ENCODE measurements at regions of chr7 and their contacts with region 1.

Region 1: DNA sequence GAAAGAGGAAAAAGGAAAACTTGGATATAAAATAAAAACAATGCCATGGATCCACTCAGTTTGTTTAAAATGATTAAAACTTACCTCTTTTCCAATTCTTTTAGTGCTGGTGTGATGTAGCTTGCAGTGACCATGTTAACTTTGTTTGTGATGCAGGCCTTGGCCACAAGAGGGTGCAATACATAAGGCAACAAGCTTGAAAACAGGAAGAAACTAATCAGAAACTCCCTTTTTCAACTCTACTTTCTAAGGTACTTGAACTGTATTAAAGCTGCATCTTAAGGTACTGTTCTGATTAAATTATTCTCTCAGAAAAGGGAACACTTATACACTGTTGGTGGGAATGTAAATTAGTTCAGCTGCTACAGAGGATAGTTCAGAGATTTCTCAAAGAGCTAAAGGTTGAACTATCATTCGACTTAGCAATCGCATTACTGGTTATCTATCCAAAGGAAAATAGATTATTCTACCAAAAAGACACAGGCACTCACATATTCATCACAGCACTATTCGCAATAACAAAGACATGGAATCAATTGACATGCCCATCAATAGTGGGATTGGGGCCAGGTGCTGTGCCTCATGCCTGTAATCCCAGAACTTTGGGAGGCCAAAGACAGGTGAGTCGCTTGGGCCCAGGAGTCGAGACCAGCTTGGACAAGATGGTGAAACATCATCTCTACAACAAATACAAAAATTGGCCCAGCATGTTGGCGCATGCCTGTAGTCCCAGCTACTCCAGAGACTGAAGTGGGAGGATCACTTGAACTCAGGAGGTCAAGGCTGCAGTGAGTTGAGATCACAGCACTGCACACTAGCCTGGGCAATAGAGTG is 50.9 kb downstream of the AASS start:
- DNase-seq: peak; percentile 73 to 75
- H3K4me3 ChIP-seq: no peak overlapping the region
- H3K4me3 Mint-ChIP-seq: no peak overlapping the region
- H3K27ac Mint-ChIP-seq: no peak overlapping the region
- H3K4me1 ChIP-seq: no peaks in the 10 kb centered on the region
- H3K4me1 Mint-ChIP-seq: no peaks in the 10 kb centered on the region
- H3K27me3 ChIP-seq: no peaks in the 10 kb centered on the region
- H3K27me3 Mint-ChIP-seq: no peaks in the 10 kb centered on the region
- CTCF ChIP-seq: peak; percentile 81 to 91

Region 2: DNA sequence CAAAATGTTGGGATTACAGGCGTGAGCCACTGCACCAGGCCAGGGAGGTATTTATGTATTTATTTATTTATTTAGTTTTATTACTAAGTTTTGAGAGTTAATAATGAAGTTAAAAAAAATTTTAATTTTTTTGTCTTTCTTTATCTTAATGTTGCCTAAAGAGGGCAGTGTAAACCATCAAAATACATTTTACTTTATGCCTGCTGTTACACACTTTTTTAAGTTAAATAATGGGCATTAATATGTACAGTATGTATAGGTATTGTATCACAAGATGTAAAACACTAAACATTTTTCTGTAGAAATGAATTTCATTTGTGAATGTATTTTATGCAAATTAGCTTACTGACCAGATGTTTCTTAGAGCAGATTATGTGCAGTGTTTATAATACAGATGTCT is 78.5 kb before region 1 on chr7:
- CTCF ChIA-PET with region 1: no interaction called
- POLR2A ChIA-PET with region 1: no interaction called
- intact Hi-C with region 1: no loop called
- DNase-seq: no peak
- H3K4me3 ChIP-seq: no peak overlapping the region
- H3K4me3 Mint-ChIP-seq: no peak overlapping the region
- H3K27ac Mint-ChIP-seq: no peak overlapping the region
- H3K4me1 ChIP-seq: no peaks in the 10 kb centered on the region
- H3K4me1 Mint-ChIP-seq: no peaks in the 10 kb centered on the region
- H3K27me3 ChIP-seq: no peaks in the 10 kb centered on the region; the same call in 1 of the 2 replicates
- H3K27me3 Mint-ChIP-seq: peaks cover 5% of the 10 kb centered on the region
- CTCF ChIP-seq: peak in 1 of 2 experiments; percentile 15

Region 3: DNA sequence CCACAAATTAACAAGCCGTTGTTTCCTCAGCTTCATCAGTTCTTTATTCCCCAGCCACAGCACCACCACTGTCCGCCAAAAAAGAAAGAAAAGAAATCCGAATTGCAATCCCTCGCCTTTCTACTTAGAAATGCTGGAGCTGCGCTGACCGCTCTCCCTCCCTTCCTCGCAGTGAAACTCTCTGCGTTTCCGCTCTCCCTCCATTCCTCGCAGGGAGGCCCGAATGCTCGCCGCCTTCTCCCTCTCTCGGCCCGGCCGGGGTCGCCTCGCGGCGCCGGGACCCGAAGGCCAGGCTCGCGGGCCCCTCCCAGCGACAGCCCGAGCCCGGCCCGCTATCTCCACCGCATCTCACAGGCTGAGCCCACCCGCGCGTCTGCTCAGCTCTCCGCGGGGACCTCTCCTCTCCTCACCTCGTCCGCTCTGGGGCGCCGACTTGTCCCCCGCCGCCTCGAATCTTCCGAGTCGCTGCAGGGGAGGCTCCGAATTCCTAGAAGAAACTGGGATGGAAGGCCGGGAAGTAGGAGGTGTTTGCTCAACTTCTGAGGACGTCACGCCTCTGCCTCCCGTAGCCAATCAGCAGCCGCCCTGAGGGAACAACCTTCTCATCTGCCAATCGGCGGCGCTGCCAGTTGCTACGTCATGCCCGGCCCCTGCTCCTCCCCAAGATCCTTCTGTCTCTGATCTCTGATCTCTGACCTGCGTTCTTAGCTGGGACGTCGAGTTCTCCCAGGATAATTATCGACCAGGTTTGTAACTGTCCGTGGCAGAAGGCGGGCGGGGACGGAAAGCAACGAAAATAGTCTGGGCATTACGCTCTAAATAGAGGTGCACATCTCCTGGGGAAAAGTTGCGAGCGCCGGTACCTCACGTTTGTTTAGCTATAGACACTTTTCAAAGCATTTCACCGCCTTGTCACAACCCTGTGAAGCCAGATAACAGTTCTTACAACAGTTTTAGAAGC is 50.9 kb after region 1 on chr7 and contains the start of gene AASS:
- CTCF ChIA-PET with region 1: no interaction called
- POLR2A ChIA-PET with region 1: no interaction called
- intact Hi-C with region 1: loop called (anchors 1 kb)
- DNase-seq: peak; percentile 86 to 93
- H3K4me3 ChIP-seq: peak within 1 kb of the TSS; percentile 51
- H3K4me3 Mint-ChIP-seq: peak within 1 kb of the TSS; percentile 89
- H3K27ac Mint-ChIP-seq: peak within 1 kb of the TSS; percentile 89
- H3K4me1 ChIP-seq: peaks cover 24% of the 10 kb centered on the region
- H3K4me1 Mint-ChIP-seq: peaks cover 20% of the 10 kb centered on the region
- H3K27me3 ChIP-seq: no peaks in the 10 kb centered on the region
- H3K27me3 Mint-ChIP-seq: no peaks in the 10 kb centered on the region
- CTCF ChIP-seq: no peak
- total RNA-seq, gene AASS: 11.3 and 14.0 TPM in 2 replicates

Region 4: GRCh38 chr7:122166708-122167107 is 73.5 kb after region 1 on chr7:
- CTCF ChIA-PET with region 1: no interaction called
- POLR2A ChIA-PET with region 1: no interaction called
- intact Hi-C with region 1: loop called (anchors 2 kb)
- DNase-seq: peak; percentile 35 to 57
- H3K4me3 ChIP-seq: no peak overlapping the region
- H3K4me3 Mint-ChIP-seq: no peak overlapping the region
- H3K27ac Mint-ChIP-seq: no peak overlapping the region
- H3K4me1 ChIP-seq: peaks cover 35% of the 10 kb centered on the region
- H3K4me1 Mint-ChIP-seq: peaks cover 5% of the 10 kb centered on the region
- H3K27me3 ChIP-seq: no peaks in the 10 kb centered on the region
- H3K27me3 Mint-ChIP-seq: no peaks in the 10 kb centered on the region
- CTCF ChIP-seq: no peak

Region 5: GRCh38 chr7:122182081-122182480 is 88.9 kb after region 1 on chr7:
- CTCF ChIA-PET with region 1: no interaction called
- POLR2A ChIA-PET with region 1: no interaction called
- intact Hi-C with region 1: loop called (anchors 2 kb)
- DNase-seq: no peak
- H3K4me3 ChIP-seq: no peak overlapping the region
- H3K4me3 Mint-ChIP-seq: no peak overlapping the region
- H3K27ac Mint-ChIP-seq: no peak overlapping the region
- H3K4me1 ChIP-seq: peaks cover 14% of the 10 kb centered on the region; the same call in 1 of the 2 replicates
- H3K4me1 Mint-ChIP-seq: peaks cover 10% of the 10 kb centered on the region
- H3K27me3 ChIP-seq: no peaks in the 10 kb centered on the region
- H3K27me3 Mint-ChIP-seq: no peaks in the 10 kb centered on the region
- CTCF ChIP-seq: no peak

Region 6: GRCh38 chr7:122528879-122529481 is 435.8 kb after region 1 on chr7:
- CTCF ChIA-PET with region 1: no interaction called
- POLR2A ChIA-PET with region 1: no interaction called
- intact Hi-C with region 1: loop called (anchors 1 kb)
- DNase-seq: peak in 1 of 2 experiments; percentile 6
- H3K4me3 ChIP-seq: no peak overlapping the region
- H3K4me3 Mint-ChIP-seq: no peak overlapping the region
- H3K27ac Mint-ChIP-seq: no peak overlapping the region
- H3K4me1 ChIP-seq: no peaks in the 10 kb centered on the region
- H3K4me1 Mint-ChIP-seq: no peaks in the 10 kb centered on the region
- H3K27me3 ChIP-seq: no peaks in the 10 kb centered on the region
- H3K27me3 Mint-ChIP-seq: peaks cover 2% of the 10 kb centered on the region
- CTCF ChIP-seq: peak; percentile 52

Measured in Caco-2 (cell line).